ENCODE measurements at regions of chr3 and their contacts with region 1.

Region 1: DNA sequence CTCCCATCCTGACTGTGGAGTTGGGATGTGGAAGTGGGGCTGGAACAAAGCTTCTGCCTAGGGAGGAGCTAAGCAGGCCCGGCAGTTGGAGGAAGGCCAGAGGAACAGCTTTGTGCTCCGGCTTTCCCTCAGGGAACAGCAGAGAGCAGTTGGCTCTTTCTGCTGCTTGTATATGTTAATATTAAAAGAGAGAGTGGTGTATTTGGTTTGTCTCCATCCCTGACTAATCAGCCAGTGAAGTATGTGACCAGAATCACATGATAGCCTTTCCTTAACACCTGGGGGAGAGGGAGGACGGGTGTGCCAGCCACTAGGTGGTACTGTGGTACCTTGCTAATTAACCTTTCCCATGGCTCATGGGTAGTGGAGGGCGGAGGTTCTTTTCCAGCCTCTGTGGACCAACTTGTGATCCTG is 10.0 kb downstream of the EIF2B5 start:
- DNase-seq: no peak
- H3K4me3 ChIP-seq: no peak overlapping the region
- H3K27ac ChIP-seq: peak overlapping the region in 2 of 4 donors; percentile 21 to 38
- H3K4me1 ChIP-seq: peaks cover 0 to 20% (median 0%) of the 10 kb centered on the region in 3 donors
- H3K27me3 ChIP-seq: no peaks in the 10 kb centered on the region
- CTCF ChIP-seq: peak; percentile 38 to 76 (median 55)
- POLR2A ChIP-seq: no peak

Region 2: GRCh38 chr3:183734750-183735494 is 410.2 kb before region 1 on chr3:
- intact Hi-C with region 1: no loop called
- DNase-seq: no peak
- H3K4me3 ChIP-seq: no peak overlapping the region
- H3K27ac ChIP-seq: no peak overlapping the region
- H3K4me1 ChIP-seq: no peaks in the 10 kb centered on the region
- H3K27me3 ChIP-seq: no peaks in the 10 kb centered on the region
- CTCF ChIP-seq: no peak
- POLR2A ChIP-seq: no peak

Region 3: DNA sequence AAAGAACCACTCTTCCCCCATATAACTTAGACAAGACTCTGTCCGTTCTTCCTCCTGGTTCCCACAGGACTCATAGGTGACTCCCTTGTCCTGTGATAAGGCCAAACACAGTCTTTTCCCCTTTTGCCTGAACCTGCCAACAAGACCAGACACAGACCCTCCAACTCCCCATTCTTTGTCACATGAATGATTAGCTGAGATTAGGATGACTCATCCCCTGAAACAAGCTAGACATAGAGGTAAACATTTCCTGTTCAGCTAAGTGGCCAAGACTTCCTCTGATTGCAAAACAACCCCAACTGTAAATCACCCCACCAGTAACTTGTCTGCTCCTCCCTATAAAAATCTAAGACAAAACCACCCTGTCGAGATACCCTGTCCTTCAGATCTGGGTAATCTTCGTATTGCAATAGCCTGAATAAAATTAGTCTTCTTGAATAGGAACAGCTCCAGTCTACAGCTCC is 59.7 kb before region 1 on chr3:
- intact Hi-C with region 1: no loop called
- DNase-seq: no peak
- H3K4me3 ChIP-seq: no peak overlapping the region
- H3K27ac ChIP-seq: no peak overlapping the region
- H3K4me1 ChIP-seq: peaks cover 0 to 7% (median 4%) of the 10 kb centered on the region in 3 donors
- H3K27me3 ChIP-seq: no peaks in the 10 kb centered on the region
- CTCF ChIP-seq: no peak
- POLR2A ChIP-seq: no peak

Region 4: DNA sequence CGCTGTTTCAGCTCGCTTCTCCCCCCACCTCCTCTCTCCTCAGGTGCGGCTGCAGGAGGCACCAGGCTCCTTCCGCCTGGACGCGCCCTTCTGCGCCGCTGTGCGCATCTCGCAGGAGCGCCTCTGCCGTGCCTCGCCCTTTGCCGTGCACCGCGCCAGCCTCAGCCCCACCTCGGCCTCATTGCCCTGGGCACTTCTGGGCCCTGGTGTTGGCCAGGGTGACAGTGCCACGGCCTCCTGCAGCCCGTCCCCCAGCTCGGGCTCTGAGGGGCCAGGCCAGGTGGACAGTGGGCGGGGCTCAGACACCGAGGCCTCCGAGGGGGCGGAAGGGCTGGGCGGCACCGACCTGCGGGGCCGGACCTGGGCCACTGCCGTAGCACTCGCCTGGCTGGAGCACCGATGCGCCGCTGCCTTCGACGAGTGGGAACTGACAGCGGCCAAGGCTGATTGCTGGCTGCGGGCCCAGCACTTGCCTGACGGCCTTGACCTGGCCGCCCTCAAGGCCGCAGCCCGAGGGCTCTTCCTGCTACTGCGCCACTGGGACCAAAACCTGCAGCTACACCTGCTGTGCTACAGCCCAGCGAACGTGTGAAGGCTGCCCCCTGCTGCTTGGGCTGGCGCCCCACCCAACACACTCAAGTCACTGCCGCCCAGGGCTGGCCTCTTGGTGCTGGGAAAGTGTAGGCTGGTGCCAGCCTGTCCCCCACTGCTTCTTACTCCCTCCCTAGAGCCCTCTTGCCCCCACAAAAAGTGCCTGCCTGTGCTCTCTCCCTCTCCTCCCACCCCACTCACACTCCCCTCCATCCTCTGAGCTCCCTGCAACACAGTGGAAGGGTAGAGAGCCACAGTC is 96.6 kb after region 1 on chr3:
- intact Hi-C with region 1: loop called (anchors 5 kb)
- DNase-seq: no peak
- H3K4me3 ChIP-seq: peak overlapping the region; percentile 12 to 38 (median 26)
- H3K27ac ChIP-seq: peak overlapping the region in 2 of 4 donors; percentile 35 to 55
- H3K4me1 ChIP-seq: peaks cover 0 to 14% (median 7%) of the 10 kb centered on the region in 3 donors
- H3K27me3 ChIP-seq: peaks cover 0 to 24% (median 0%) of the 10 kb centered on the region in 4 donors
- CTCF ChIP-seq: peak in 5 of 6 experiments; percentile 54 to 81 (median 55)
- POLR2A ChIP-seq: no peak